ENCODE measurements at regions of chr19 and their contacts with region 1.

Region 1: GRCh38 chr19:16628183-16628983 is at the start of gene MED26:
- DNase-seq: peak; percentile 99

Region 2: DNA sequence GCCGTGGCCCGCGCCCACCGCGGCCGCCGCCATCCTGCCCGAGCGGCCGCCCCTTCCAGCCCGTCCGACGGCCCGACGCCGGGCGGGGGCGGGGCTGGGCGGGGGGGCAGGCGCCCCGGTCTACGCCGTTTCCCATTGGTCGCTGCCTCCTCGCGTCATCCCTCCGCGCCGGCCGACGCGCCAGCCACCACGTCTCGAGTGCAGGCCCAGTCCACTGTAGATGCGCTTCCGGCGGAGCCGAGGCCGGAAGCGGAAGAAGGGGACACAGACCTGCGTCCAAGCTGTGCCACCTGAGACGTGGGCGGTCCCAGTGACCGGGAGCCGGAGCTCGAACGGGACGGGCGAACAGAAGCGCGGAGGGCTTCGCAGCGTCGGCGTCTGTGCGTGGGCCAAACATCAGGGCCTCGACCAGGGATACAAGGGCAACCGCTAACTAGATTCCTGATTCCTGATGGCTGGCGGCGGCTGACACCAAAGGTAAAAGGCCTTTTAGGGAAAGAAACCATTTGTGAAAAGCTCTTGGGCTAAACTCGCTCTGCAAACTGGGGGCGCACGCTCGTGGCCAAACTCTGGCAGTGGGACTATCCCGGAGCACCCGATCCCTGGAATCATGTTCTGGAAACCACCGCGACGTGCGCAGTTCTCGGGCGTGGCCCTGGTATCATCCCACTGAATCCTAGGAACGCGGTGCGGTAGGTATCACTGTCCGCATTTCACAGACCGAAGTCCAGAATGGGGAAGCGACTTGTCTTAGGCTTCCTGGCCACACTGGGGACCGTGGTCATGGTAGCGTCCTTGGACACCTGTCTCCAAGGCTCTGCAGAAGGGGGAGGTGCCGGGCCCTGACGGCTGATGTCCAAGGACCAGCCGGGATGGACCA is 55.8 kb before region 1 on chr19 and contains the start of gene SLC35E1:
- CTCF ChIA-PET with region 1: no interaction called
- POLR2A ChIA-PET with region 1: interaction called, 20 read pairs
- DNase-seq: peak; percentile 100

Region 3: DNA sequence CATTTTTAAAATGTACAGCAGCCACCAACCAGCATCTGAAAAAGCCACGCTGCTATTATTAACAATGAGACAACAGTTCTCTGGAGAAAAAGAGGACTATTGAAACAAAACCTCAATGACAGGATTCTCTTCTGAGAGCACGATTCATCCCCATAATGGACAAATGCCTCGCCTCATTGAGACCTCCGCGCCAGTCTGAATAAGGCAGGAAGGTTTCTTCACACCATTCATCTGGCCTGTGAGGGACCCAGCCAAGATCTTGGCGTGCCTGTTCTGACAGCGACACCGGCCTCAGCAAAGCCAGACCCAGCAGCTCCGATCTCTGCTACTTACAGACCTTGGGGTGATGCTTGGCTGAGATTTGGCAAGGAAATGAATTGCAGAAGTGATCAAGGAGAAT is 16.8 kb after region 1 on chr19:
- CTCF ChIA-PET with region 1: no interaction called
- POLR2A ChIA-PET with region 1: no interaction called
- DNase-seq: no peak

Region 4: GRCh38 chr19:16688084-16688483 is 59.7 kb after region 1 on chr19:
- CTCF ChIA-PET with region 1: no interaction called
- POLR2A ChIA-PET with region 1: no interaction called
- DNase-seq: no peak

Region 5: GRCh38 chr19:16771618-16772017 is 143.2 kb after region 1 on chr19:
- CTCF ChIA-PET with region 1: no interaction called
- POLR2A ChIA-PET with region 1: no interaction called
- DNase-seq: peak; percentile 85

Measured in HEK293T (cell line).